Right cardiac atrium (tissue), 5 donors: ENCODE measurements at regions of chr21 and their contacts with region 1.

Region 1: DNA sequence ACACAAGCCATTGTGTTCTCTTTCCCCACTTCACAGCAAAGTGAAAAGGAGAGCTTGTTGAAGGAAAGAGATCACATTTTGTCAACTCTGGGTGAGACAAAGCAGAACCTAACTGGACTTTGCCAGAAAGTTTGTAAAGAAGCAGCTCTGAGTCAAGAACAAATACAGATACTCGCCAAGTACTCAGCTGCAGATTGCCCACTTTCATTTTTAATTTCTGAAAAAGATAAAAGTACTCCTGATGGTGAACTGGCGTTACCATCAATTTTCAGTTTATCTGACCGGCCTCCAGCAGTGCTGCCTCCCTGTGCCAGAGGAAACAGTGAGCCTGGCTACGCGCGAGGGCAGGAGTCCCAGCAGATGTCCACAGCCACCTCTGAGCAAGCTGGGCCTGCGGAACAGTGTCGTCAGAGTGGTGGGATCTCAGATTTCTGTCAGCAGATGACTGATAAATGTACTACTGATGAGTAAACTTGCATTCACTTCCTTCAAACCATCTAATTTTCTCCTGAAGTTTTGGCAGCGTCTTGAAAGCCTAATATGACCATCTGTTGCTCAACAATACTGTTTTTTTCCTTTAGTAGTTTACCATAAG is 43.7 kb downstream of the BACH1 start:
- DNase-seq: peak; percentile 81 to 91 (median 87)
- ATAC-seq: peak; percentile 95 to 96
- H3K4me3 ChIP-seq: no peak overlapping the region
- H3K27ac ChIP-seq: peak overlapping the region; percentile 67
- H3K4me1 ChIP-seq: peaks cover 3% of the 10 kb centered on the region
- H3K27me3 ChIP-seq: no peaks in the 10 kb centered on the region

Region 2: DNA sequence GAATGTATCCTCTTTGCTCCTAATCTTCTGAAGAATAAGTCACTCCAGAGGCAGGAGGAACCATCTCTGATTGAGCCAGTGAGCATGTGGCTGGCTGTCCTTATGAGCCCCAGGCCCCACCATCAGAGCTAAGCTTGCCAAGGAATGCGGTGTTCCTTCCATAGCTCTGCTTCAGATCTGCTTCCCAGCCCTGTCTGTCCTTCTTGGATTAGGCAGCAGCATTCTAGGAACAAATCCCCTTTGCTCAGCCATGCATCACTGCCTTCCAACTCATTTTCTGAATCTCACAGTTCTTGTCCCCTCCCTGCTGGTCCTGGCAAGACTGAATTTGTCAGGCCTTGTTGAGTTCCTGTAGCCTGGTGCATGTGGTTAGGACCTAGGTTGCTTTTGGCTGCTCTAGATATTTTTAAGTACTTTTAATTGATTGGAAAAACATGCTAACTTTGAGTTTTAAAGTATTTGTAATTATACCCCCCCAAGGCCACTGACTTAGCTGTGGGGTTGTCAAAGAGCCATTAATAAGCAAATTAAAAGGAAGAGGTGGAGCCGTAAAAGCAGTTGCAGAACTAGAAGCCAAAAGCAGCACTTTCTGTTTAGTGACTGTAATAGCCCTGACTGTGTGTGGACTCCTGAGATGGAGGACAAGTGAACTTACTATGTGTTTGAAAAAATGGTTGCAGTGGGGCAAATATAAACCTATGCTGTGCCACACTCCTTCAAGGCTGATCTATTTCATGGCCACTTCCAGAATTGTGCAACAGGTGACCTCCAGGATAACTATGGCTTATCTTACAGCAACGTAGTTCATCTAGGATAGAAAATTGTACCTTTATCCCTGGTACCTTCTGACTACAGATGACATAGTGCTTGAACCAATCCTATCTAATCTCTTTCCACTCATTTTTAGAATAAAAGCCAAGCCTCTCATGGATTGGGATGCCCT is 105.1 kb before region 1 on chr21:
- intact Hi-C with region 1: loop called in 1 of 4 experiments (anchors 5 kb)
- DNase-seq: peak in 2 of 3 donors; percentile 31 to 52
- ATAC-seq: peak; percentile 77 to 81
- H3K4me3 ChIP-seq: no peak overlapping the region
- H3K27ac ChIP-seq: no peak overlapping the region
- H3K4me1 ChIP-seq: no peaks in the 10 kb centered on the region
- H3K27me3 ChIP-seq: no peaks in the 10 kb centered on the region